ENCODE measurements at regions of chr4 and their contacts with region 1.

Region 1: DNA sequence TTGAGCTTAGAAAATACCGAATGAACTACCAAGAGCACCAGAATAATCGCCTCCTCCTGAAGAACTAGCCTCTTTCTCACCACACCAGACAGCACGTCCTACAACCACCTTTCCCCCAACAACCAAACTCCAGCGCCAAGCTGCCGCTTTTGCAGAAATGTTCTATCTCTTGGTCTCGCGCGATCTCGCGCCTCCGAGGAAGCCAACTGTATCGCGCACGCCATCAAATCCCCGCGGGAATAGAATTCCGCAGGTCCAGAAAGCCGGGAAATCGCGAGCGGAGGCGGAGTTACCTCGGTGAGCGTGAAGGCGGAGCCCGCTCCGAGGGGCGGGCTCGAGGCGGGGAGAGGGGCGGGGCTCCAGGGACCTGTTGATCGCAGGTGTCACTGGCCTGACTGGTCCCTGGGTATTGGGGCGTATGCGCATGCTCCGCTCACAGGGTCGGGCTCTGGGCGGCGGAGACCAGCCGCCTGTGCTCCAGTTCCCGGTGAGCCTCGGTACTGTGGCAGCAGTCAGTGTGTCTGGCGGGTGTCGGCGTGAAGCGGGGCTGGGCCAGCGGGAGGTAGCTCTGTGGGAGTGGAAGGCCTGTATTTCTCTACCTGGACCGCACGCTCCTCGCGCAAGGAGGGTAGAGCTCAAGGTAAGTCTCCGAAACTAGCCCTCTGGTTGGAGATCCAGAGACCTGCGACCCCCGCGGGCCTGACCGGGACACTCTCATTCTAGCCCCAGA is at the start of gene USP53:
- DNase-seq: peak; percentile 95 to 98 (median 98)
- H3K4me3 ChIP-seq: peak within 1 kb of the TSS; percentile 98 to 99
- H3K4me3 Mint-ChIP-seq: peak within 1 kb of the TSS; percentile 93 to 99 (median 96)
- H3K27ac ChIP-seq: peak within 1 kb of the TSS; percentile 75
- H3K27ac Mint-ChIP-seq: peak within 1 kb of the TSS; percentile 87 to 99 (median 97)
- H3K4me1 ChIP-seq: peaks cover 25% of the 10 kb centered on the region
- H3K4me1 Mint-ChIP-seq: peaks cover 19 to 37% (median 28%) of the 10 kb centered on the region in 4 donors
- H3K27me3 ChIP-seq: no peaks in the 10 kb centered on the region
- H3K27me3 Mint-ChIP-seq: no peaks in the 10 kb centered on the region
- total RNA-seq, gene USP53: 27.9 to 28.9 TPM

Region 2: DNA sequence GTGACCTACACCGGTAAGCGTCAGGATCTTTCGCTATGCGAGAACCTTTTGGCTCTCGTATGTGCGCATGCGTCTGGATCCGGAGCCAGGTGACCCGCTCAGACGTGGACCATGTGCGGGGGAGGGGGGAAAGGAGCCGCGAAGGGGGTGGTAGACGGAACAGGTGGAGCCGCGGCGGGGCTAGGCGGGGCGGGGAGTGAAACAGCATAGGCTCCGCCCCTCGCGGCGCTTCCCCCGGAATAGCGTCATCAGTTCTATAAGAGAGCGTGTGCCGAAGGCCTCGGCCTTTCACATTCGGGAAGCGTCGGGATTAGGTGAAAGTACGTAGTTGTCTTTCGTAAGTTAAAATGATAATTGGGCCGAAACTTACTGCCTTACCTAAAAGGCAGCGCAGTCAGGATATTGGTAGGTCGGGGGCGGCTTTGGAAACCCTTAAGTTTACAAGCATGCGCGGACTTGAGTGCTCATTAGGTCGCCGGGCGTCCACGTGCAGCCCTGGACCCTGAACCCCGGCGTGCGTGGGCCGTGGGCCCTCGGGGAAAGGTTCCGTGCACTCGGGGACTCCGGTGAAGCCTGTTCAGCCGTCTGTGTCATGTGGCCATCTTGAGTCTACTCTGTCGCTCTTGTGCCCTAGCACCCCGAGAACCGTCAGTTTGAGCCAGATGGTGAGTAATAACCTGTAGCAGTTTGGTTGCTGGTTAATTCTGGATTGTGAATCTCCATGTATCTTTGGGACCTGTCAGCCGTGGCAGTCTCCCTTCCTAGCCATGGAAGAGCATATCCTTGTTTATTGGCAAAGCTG is 933.7 kb before region 1 on chr4:
- CTCF ChIA-PET with region 1: no interaction called
- POLR2A ChIA-PET with region 1: no interaction called
- intact Hi-C with region 1: loop called (anchors 2 kb)
- DNase-seq: peak; percentile 93 to 99 (median 97)
- H3K4me3 ChIP-seq: peak overlapping the region; percentile 32 to 69
- H3K4me3 Mint-ChIP-seq: peak overlapping the region; percentile 90 to 99 (median 94)
- H3K27ac ChIP-seq: peak overlapping the region; percentile 96
- H3K27ac Mint-ChIP-seq: peak overlapping the region; percentile 94 to 100 (median 98)
- H3K4me1 ChIP-seq: peaks cover 37% of the 10 kb centered on the region
- H3K4me1 Mint-ChIP-seq: peaks cover 22 to 57% (median 40%) of the 10 kb centered on the region in 4 donors
- H3K27me3 ChIP-seq: no peaks in the 10 kb centered on the region
- H3K27me3 Mint-ChIP-seq: no peaks in the 10 kb centered on the region

Region 3: GRCh38 chr4:119041951-119042560 is 170.3 kb before region 1 on chr4:
- CTCF ChIA-PET with region 1: interaction called, 22 read pairs
- POLR2A ChIA-PET with region 1: interaction called, 8 read pairs
- intact Hi-C with region 1: loop called (anchors 1 kb)
- DNase-seq: peak; percentile 58 to 63 (median 61)
- H3K4me3 ChIP-seq: no peak overlapping the region
- H3K4me3 Mint-ChIP-seq: no peak overlapping the region
- H3K27ac ChIP-seq: no peak overlapping the region
- H3K27ac Mint-ChIP-seq: no peak overlapping the region
- H3K4me1 ChIP-seq: no peaks in the 10 kb centered on the region
- H3K4me1 Mint-ChIP-seq: no peaks in the 10 kb centered on the region
- H3K27me3 ChIP-seq: no peaks in the 10 kb centered on the region
- H3K27me3 Mint-ChIP-seq: peaks cover 0 to 1% of the 10 kb centered on the region in 2 donors

Region 4: GRCh38 chr4:119138046-119138445 is 74.4 kb before region 1 on chr4:
- CTCF ChIA-PET with region 1: interaction called, 5 read pairs
- POLR2A ChIA-PET with region 1: interaction called, 37 read pairs
- intact Hi-C with region 1: loop called (anchors 5 kb)
- DNase-seq: peak in 1 of 5 donors; percentile 17
- H3K4me3 ChIP-seq: no peak overlapping the region
- H3K4me3 Mint-ChIP-seq: peak overlapping the region in 6 of 8 donors; percentile 14 to 80 (median 44)
- H3K27ac ChIP-seq: no peak overlapping the region
- H3K27ac Mint-ChIP-seq: peak overlapping the region in 6 of 7 donors; percentile 12 to 86 (median 54)
- H3K4me1 ChIP-seq: peaks cover 36% of the 10 kb centered on the region
- H3K4me1 Mint-ChIP-seq: peaks cover 36 to 44% (median 39%) of the 10 kb centered on the region in 4 donors
- H3K27me3 ChIP-seq: no peaks in the 10 kb centered on the region
- H3K27me3 Mint-ChIP-seq: peaks cover 0 to 1% of the 10 kb centered on the region in 2 donors

Region 5: DNA sequence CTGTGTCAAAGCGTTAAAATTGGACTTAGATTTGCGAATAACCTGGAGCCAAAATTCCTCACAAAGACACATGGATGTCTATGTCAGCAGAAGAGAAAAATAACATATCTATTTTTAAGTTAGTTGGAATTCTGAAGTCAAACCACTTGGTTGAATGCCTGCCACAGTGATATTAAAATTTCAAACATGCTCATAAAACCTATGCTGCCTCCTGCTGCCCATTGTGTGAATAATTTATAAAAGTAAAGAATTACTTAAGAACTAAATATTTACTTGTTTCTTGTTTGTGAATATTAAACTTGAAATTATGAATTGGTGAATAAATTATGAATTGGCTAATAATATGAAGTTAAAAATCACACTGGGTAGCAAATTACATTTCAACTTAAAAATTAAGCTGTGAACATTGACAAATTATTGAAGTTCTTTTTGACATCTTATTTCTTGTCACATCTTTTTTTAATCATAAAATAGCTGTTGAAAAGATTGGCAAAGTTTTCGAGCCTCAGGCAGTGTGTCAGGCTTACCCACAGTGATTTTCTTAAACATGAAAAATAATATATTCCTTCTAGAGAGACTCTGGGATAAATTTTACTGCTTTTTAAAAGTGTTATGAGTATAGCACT is 74.1 kb after region 1 on chr4:
- CTCF ChIA-PET with region 1: interaction called, 5 read pairs
- POLR2A ChIA-PET with region 1: interaction called, 4 read pairs
- intact Hi-C with region 1: loop called (anchors 5 kb)
- DNase-seq: peak in 4 of 5 donors; percentile 35 to 50 (median 48)
- H3K4me3 ChIP-seq: no peak overlapping the region
- H3K4me3 Mint-ChIP-seq: no peak overlapping the region
- H3K27ac ChIP-seq: no peak overlapping the region
- H3K27ac Mint-ChIP-seq: peak overlapping the region in 1 of 7 donors; percentile 22
- H3K4me1 ChIP-seq: peaks cover 19% of the 10 kb centered on the region
- H3K4me1 Mint-ChIP-seq: peaks cover 18 to 24% (median 22%) of the 10 kb centered on the region in 4 donors
- H3K27me3 ChIP-seq: no peaks in the 10 kb centered on the region
- H3K27me3 Mint-ChIP-seq: no peaks in the 10 kb centered on the region

Region 6: DNA sequence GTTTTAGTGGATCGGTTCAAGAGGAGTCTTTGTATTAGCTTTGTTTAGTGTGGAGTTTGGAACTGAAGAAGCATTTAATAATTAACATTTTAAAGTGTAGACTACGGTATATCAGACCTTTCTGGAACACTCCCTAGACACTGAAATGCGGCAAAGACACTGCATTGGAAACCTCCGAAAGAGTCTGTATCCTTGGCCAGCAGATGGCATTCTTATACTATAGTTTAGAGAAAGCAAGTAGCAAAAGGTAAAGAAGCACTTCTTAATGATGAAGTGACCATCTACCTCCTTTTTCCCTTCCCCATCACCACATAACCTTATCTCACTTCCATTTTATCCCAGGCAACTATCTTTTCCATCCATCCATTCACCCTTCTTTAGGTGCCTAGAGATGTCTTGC is 102.0 kb after region 1 on chr4:
- CTCF ChIA-PET with region 1: no interaction called
- POLR2A ChIA-PET with region 1: no interaction called
- intact Hi-C with region 1: no loop called
- DNase-seq: peak in 4 of 5 donors; percentile 33 to 46 (median 40)
- H3K4me3 ChIP-seq: no peak overlapping the region
- H3K4me3 Mint-ChIP-seq: no peak overlapping the region
- H3K27ac ChIP-seq: no peak overlapping the region
- H3K27ac Mint-ChIP-seq: no peak overlapping the region
- H3K4me1 ChIP-seq: no peaks in the 10 kb centered on the region
- H3K4me1 Mint-ChIP-seq: no peaks in the 10 kb centered on the region
- H3K27me3 ChIP-seq: no peaks in the 10 kb centered on the region
- H3K27me3 Mint-ChIP-seq: peaks cover 7 to 9% of the 10 kb centered on the region in 2 donors

Region 7: DNA sequence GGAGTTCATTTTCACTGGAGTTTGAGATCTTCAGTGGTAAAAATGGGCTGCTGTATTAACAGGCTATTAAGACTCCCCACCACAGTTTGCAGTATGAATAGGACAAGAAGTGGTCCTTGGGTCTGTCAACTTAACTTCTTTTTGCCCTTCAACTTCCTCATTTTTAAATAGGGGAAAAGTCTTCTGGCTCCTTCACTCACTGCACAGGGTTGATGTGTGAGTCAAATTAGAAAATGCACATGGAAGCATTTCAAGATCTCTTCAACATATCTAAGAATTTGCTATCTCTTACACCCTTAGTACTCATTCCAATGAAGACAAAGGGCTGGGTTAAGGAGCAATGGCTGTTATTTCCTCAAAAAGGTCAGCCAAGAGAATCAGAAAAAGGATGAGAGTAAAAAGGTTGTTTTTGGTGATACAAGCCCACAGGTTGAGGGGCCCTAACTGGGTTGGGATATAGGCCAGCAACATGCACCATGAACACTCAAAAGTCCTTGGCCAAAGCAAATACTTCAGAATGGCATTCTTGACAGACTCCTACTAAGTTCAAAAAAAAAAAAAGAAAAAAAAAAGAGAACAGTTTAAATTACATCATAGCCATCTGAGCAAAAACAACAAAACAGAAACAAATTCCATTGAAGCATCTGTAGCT is 402.8 kb after region 1 on chr4:
- CTCF ChIA-PET with region 1: no interaction called
- POLR2A ChIA-PET with region 1: no interaction called
- intact Hi-C with region 1: no loop called
- DNase-seq: no peak
- H3K4me3 ChIP-seq: no peak overlapping the region
- H3K4me3 Mint-ChIP-seq: no peak overlapping the region
- H3K27ac ChIP-seq: no peak overlapping the region
- H3K27ac Mint-ChIP-seq: no peak overlapping the region
- H3K4me1 ChIP-seq: no peaks in the 10 kb centered on the region
- H3K4me1 Mint-ChIP-seq: no peaks in the 10 kb centered on the region
- H3K27me3 ChIP-seq: peaks cover 3% of the 10 kb centered on the region
- H3K27me3 Mint-ChIP-seq: peaks cover 1 to 8% of the 10 kb centered on the region in 2 donors

Region 8: DNA sequence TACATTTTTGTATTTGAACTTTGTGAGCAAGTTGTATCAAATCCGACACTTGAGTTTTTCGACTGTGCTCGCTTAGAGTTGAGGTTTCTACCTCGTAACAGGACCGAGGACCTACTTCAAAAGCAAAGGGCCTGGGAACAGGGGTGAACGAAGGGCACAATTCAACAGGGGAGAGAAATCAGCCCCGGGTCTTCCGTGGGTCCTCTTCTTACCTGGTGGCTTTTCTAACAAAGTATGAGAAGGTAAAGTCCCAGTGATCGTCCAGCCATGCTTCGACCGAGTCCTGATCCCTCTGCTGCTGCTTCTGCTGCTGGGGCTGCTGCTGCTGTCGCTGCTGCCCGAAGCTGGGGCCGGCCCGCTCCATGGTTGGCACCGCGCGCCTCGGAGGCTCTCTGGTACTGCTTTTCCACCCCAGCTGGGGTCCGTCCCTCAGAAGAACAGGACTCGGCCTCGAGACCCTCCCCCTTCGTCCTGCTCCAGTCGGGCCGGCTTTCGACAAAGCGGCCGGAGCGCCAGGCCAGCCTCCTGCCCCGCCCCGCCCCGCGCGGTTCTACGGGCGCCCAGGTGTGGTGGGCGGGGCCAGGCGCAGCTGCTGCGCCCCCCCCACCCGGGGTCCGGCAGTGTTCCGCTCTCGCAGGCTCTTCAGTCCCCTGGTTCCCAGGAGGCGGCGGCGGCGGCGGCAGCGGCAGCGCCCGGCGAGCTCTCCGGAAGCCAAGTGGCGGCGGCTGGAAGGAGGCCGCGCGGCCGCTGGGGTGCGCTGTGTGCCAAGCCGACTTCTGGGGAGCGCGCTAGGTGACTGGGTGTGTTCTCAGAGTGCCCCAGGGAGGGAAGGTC is 416.1 kb after region 1 on chr4 and contains the start of gene PDE5A:
- CTCF ChIA-PET with region 1: no interaction called
- POLR2A ChIA-PET with region 1: no interaction called
- intact Hi-C with region 1: loop called (anchors 5 kb)
- DNase-seq: peak; percentile 67 to 75 (median 71)
- H3K4me3 ChIP-seq: peak within 1 kb of the TSS; percentile 33 to 67
- H3K4me3 Mint-ChIP-seq: peak within 1 kb of the TSS; percentile 89 to 94 (median 92)
- H3K27ac ChIP-seq: peak within 1 kb of the TSS; percentile 48
- H3K27ac Mint-ChIP-seq: peak within 1 kb of the TSS; percentile 72 to 91 (median 85)
- H3K4me1 ChIP-seq: peaks cover 16% of the 10 kb centered on the region
- H3K4me1 Mint-ChIP-seq: peaks cover 7 to 26% (median 16%) of the 10 kb centered on the region in 4 donors
- H3K27me3 ChIP-seq: peaks cover 4% of the 10 kb centered on the region
- H3K27me3 Mint-ChIP-seq: peaks cover 4 to 7% of the 10 kb centered on the region in 2 donors
- total RNA-seq, gene PDE5A: 1.8 to 2.9 TPM

Measured in CD4-positive, alpha-beta memory T cell (primary cell).